Panc1 (cell line): ENCODE measurements at regions of chr6 and their contacts with region 1.

Region 1: DNA sequence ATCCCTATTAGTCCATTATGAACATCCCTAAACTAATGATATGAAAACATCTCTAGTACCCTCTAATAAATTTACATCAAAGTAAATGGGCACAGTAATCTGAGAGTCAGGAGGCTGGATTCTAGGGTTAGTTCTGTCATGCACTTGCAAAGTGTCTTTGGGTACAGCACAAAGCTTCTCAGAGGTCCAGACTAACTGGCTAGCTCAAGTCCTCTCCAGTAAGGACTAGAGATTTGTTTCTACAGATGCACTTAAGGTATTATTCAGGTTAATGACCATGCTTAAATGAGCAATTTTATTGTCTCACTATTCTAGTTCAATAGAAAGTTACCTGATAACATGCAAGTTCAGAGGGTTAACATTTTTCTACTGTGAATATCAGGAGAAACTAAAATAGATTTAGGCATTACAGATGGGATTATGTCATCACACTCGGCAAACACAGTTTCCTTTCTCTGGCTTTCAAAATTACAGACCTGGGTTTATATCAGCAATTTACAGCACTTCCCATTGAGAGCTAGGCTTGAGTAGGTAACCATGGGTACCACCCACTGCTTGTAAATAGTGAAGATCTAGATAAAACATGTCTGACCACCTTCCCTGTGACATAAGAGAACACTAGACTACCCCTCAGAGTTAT is 402.9 kb upstream of the RUNX2 start:
- DNase-seq: no peak
- ATAC-seq: no peak
- H3K4me3 ChIP-seq: no peak overlapping the region
- H3K27ac ChIP-seq: no peak overlapping the region
- H3K4me1 ChIP-seq: no peaks in the 10 kb centered on the region
- H3K27me3 ChIP-seq: no peaks in the 10 kb centered on the region
- CTCF ChIP-seq: no peak

Region 2: DNA sequence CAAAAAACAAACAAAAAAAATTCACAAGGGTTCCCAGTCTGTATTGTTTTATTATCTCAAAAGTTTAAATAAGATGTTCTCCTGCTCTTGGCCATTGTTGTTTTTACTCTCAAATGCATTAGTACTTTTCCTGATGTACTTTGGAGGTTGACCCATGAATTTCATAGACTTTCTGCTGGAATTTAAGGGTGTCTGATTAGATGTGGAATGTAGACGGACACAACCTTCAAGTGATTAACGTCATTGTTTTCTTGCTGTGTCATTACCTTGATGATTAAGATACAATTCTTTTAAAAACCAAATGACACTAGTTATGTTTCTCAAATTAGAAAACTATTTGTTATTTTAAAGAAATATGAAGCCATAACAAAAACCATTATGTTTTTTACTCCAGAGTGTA is 18.5 kb before region 1 on chr6:
- CTCF ChIA-PET with region 1: no interaction called
- POLR2A ChIA-PET with region 1: no interaction called
- in situ Hi-C with region 1: no loop called
- intact Hi-C with region 1: loop called (anchors 1 kb)
- DNase-seq: no peak
- ATAC-seq: no peak
- H3K4me3 ChIP-seq: no peak overlapping the region
- H3K27ac ChIP-seq: no peak overlapping the region
- H3K4me1 ChIP-seq: no peaks in the 10 kb centered on the region
- H3K27me3 ChIP-seq: no peaks in the 10 kb centered on the region
- CTCF ChIP-seq: no peak

Region 3: DNA sequence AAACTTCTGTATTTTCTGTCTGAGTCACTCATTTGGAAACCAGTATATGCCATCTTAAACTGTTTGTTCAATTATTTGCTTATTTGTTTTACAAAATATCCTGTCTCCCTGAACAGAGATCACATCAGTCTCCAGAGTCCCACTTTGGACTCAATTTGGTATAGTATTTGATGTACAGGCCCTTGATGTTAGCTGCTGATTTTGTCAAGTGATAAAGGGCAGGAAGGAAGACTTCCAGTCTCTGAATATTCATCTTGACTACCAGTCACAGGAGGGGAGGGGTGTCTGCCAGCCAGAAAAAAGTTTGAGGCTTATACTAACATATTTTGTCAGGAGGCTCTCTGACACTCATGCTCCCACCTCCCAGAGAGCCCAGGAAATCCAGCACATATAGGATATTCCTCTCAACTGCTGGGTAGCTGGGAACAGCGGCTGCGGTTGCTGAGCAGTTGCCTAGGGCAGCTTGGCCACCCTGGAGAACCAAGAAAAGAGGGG is 26.1 kb after region 1 on chr6:
- CTCF ChIA-PET with region 1: no interaction called
- POLR2A ChIA-PET with region 1: no interaction called
- in situ Hi-C with region 1: no loop called
- intact Hi-C with region 1: no loop called
- DNase-seq: no peak
- ATAC-seq: no peak
- H3K4me3 ChIP-seq: no peak overlapping the region
- H3K27ac ChIP-seq: no peak overlapping the region
- H3K4me1 ChIP-seq: no peaks in the 10 kb centered on the region
- H3K27me3 ChIP-seq: no peaks in the 10 kb centered on the region
- CTCF ChIP-seq: no peak